ENCODE measurements at regions of chr3 and their contacts with region 1.

Region 1: GRCh38 chr3:33074217-33075067 is 22.5 kb downstream of the GLB1 start:
- DNase-seq: no peak
- H3K4me3 ChIP-seq: no peak overlapping the region
- CTCF ChIP-seq: peak in 1 of 3 donors; percentile 51
- POLR2A ChIP-seq: no peak

Region 2: DNA sequence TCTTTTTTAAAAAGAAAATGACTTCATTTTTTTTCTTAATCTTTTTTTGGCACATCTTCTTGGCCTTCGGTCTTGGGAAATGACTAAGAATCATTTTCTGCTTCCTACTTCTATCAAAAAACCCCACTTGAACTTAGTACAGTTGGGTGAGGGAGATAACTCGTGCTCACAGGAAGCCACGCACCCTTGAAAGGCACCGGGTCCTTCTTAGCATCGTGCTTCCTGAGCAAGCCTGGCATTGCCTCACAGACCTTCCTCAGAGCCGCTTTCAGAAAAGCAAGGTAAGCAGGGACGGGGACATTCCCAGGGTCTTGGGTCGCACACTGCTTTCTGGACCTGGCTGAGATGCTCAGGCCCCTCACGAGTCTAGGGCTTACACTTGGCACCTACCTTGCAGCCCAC is 123.0 kb before region 1 on chr3 and contains the start of gene CCR4:
- intact Hi-C with region 1: loop called (anchors 10 kb)
- DNase-seq: no peak
- H3K4me3 ChIP-seq: no peak within 1 kb of the TSS
- CTCF ChIP-seq: no peak
- POLR2A ChIP-seq: no peak
- total RNA-seq, gene CCR4: 0.23 to 0.69 (median 0.42) TPM

Region 3: DNA sequence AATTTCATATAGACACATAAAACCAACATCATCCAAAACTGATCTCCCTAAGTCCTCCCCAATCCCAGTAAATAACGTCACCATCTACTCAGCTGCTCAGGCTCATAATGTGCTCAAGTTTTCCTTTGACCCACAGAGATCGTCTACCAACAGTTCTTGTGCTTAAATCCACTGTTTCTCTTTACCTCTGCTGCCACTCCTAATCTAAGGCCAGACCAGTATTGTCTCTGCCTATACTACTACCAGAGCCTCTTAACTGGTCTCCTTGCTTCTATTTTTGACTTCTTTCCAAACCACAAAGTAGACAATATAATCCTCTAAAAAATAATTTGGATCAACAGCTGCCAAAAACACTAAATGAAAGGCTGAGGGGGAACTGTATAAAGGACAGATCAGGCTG is 578.3 kb after region 1 on chr3:
- intact Hi-C with region 1: no loop called
- DNase-seq: no peak
- H3K4me3 ChIP-seq: no peak overlapping the region
- CTCF ChIP-seq: no peak
- POLR2A ChIP-seq: no peak